Activated CD4-positive, alpha-beta memory T cell treated with anti-CD3 and anti-CD28 coated beads for 36 hours (primary cell): ENCODE measurements at regions of chr5 and their contacts with region 1.

Region 1: DNA sequence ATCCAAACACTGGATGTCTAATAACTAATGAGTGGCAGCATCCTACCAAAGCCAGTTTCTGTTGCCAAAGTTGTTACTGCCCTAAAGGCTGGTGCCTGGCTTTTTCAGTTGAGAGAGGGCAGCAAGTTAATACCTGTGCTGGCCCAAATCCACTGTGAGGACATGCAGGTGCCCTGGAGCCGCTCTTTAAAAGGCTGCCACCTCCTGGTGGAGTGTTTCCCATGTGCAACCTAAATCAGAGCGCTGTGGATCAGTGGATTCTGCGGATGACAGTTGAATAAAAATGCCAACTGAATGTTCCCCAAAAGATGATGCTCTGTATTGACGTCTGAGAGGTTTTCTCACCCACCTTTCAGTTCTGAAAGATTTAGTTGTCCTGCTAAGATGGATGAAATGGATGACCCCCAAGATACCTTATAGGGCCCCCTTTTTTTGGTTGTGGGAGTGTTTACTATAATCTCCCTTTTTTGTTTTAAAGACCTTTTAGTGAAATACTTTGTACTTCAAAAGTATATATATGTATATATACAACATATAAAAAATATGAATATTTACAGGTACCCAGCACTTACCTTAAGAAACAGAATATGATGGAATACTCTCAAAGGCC is 146.4 kb downstream of the EGFLAM start:
- DNase-seq: peak; percentile 20
- H3K4me3 Mint-ChIP-seq: no peak overlapping the region
- H3K27ac Mint-ChIP-seq: no peak overlapping the region
- H3K4me1 Mint-ChIP-seq: no peaks in the 10 kb centered on the region
- H3K27me3 Mint-ChIP-seq: peaks cover 20% of the 10 kb centered on the region

Region 2: GRCh38 chr5:38208782-38209378 is 195.9 kb before region 1 on chr5:
- CTCF ChIA-PET with region 1: no interaction called
- POLR2A ChIA-PET with region 1: no interaction called
- intact Hi-C with region 1: loop called (anchors 5 kb)
- DNase-seq: peak; percentile 10
- H3K4me3 Mint-ChIP-seq: no peak overlapping the region
- H3K27ac Mint-ChIP-seq: no peak overlapping the region
- H3K4me1 Mint-ChIP-seq: no peaks in the 10 kb centered on the region
- H3K27me3 Mint-ChIP-seq: peaks cover 2% of the 10 kb centered on the region

Region 3: DNA sequence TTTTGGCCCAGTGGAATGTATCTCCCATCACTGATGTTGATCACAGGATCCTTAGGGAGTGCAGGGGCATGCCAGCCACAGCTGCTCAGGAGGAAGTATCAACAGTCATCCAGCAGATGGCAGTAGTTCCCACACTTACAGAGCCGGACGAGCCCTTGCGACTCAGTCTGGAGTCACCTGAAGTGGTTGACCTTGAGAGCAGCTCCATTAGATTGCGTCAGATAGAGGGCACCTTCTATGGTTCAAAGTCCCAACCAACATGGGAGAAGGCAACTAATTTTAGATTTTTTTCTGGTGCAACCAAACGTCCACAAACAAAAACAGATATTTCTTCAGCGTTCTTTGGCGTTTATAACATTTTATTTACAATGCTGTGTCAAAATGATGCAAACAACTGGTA is 21.9 kb before region 1 on chr5:
- CTCF ChIA-PET with region 1: interaction called, 4 read pairs
- POLR2A ChIA-PET with region 1: no interaction called
- intact Hi-C with region 1: loop called (anchors 1 kb)
- DNase-seq: peak; percentile 64
- H3K4me3 Mint-ChIP-seq: no peak overlapping the region
- H3K27ac Mint-ChIP-seq: no peak overlapping the region
- H3K4me1 Mint-ChIP-seq: peaks cover 3% of the 10 kb centered on the region
- H3K27me3 Mint-ChIP-seq: peaks cover 23% of the 10 kb centered on the region

Region 4: GRCh38 chr5:38426986-38427950 is 22.5 kb after region 1 on chr5:
- CTCF ChIA-PET with region 1: no interaction called
- POLR2A ChIA-PET with region 1: no interaction called
- intact Hi-C with region 1: no loop called
- DNase-seq: no peak
- H3K4me3 Mint-ChIP-seq: no peak overlapping the region
- H3K27ac Mint-ChIP-seq: no peak overlapping the region
- H3K4me1 Mint-ChIP-seq: no peaks in the 10 kb centered on the region
- H3K27me3 Mint-ChIP-seq: peaks cover 8% of the 10 kb centered on the region

Region 5: GRCh38 chr5:38467353-38468040 is 62.7 kb after region 1 on chr5:
- CTCF ChIA-PET with region 1: no interaction called
- POLR2A ChIA-PET with region 1: no interaction called
- intact Hi-C with region 1: no loop called
- DNase-seq: no peak
- H3K4me3 Mint-ChIP-seq: no peak overlapping the region
- H3K27ac Mint-ChIP-seq: no peak overlapping the region
- H3K4me1 Mint-ChIP-seq: no peaks in the 10 kb centered on the region
- H3K27me3 Mint-ChIP-seq: peaks cover 23% of the 10 kb centered on the region